ENCODE measurements at regions of chr20 and their contacts with region 1.

Region 1: GRCh38 chr20:25399037-25399430 is 8.4 kb upstream of the ABHD12 start:
- DNase-seq: peak; percentile 26
- H3K4me3 ChIP-seq: no peak overlapping the region
- H3K27me3 ChIP-seq: no peaks in the 10 kb centered on the region
- CTCF ChIP-seq: peak; percentile 61

Region 2: GRCh38 chr20:24992487-24993205 is 406.4 kb before region 1 on chr20 and contains the start of gene APMAP:
- CTCF ChIA-PET with region 1: interaction called, 28 read pairs
- POLR2A ChIA-PET with region 1: no interaction called
- DNase-seq: peak; percentile 44
- H3K4me3 ChIP-seq: peak within 1 kb of the TSS; percentile 89
- H3K27me3 ChIP-seq: 0 out of 2 replicates have a peak, but pooled peaks cover 2% of the 10 kb centered on the region
- CTCF ChIP-seq: no peak
- polyA plus RNA-seq, gene APMAP: 75.8 and 76.2 TPM in 2 replicates

Region 3: GRCh38 chr20:25065625-25066338 is 333.3 kb before region 1 on chr20:
- CTCF ChIA-PET with region 1: interaction called, 13 read pairs
- POLR2A ChIA-PET with region 1: no interaction called
- DNase-seq: no peak
- H3K4me3 ChIP-seq: no peak overlapping the region
- H3K27me3 ChIP-seq: peaks cover 41% of the 10 kb centered on the region
- CTCF ChIP-seq: peak; percentile 82

Region 4: DNA sequence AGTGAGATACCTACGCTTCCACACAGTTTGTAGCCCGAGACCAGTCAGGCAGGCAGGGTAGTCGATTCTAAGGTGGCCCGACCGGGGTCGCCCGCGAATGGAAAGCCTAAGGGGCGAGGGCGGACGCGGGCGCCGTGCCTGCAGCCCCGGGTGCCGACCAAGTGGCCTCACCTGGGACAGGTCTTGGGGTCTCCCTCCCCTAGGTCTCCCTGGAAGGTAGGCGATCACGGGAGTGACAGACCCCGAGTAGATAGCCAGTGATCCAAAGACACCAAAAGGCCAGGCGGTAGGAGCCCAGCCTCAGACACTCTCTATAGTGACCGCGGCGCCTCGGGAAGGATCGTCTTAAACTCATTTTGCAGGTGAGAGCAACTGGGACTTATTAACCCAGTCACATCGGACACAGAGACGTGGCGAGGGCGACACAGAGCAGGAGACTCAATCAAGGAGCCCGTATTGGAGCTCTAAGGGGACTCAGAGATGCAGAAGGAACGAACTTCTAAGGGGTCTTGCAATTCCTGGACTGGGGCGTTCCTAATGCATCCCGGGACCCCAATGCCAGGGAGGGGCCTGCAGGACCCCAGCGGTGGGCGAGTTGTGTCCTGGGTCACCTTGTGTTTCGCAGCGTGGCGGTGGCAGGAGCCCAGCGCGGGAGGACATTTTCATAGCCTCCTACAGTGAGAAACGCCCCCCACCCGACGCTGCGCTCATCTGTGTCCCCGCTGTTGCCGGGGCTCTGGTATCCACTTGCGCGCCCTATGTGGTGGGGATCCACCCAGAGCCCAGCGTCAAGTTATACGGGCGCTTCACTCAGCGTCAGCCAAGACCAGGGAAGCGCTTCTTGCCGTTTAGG is 315.0 kb before region 1 on chr20:
- CTCF ChIA-PET with region 1: interaction called, 12 read pairs
- POLR2A ChIA-PET with region 1: no interaction called
- DNase-seq: no peak
- H3K4me3 ChIP-seq: no peak overlapping the region
- H3K27me3 ChIP-seq: peaks cover 60% of the 10 kb centered on the region
- CTCF ChIP-seq: peak; percentile 53

Region 5: DNA sequence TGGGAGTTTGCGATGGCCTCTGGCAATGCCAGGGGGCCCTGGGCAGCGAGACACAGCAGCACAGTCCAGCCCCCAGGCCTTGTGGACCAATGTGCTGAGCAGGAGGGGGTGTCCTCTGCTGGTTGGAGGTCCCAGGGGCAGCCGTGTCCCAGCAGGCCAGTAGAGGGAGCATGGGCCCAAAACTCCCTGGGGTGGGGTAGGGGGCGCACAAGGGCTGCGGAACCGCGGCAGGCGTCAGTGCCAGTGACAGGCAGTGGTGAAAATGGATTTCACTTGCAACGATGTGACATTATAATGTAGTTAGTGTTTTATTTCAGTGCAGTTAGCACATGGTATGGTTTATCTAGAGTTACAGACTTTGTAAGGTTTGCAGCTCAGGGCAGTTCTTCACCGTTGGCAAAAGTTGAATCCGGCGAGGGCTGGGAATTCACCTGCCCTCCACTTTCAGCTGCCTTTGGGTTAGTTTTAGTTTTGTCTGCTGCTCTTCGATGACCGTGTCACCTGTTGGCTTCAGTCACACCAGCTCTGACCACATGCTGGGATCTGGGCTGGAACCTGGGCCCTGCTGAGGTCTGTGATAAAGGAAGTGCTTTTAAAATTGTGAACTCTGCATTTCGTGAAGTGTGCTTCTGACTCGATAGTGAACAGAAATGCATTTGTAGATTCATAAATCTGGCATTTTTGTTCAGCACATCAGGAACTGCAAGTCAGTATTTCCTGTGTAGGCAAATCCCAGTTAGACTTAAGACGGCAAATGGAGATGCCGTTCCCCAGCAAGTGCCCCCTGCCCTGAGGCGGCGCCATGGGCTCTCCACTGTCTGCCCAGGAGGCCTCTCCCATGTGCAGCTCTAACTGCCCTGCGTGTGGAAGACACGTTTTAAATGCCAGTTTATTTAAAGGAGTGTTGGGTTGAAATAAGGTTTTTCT is 104.3 kb before region 1 on chr20:
- CTCF ChIA-PET with region 1: interaction called, 71 read pairs
- POLR2A ChIA-PET with region 1: no interaction called
- DNase-seq: no peak
- H3K4me3 ChIP-seq: no peak overlapping the region
- H3K27me3 ChIP-seq: no peaks in the 10 kb centered on the region
- CTCF ChIP-seq: peak; percentile 98

Region 6: GRCh38 chr20:25299806-25300205 is 99.2 kb before region 1 on chr20:
- CTCF ChIA-PET with region 1: interaction called, 71 read pairs
- POLR2A ChIA-PET with region 1: no interaction called
- DNase-seq: no peak
- H3K4me3 ChIP-seq: no peak overlapping the region
- H3K27me3 ChIP-seq: no peaks in the 10 kb centered on the region
- CTCF ChIP-seq: no peak

Region 7: GRCh38 chr20:25310268-25310920 is 88.6 kb before region 1 on chr20:
- CTCF ChIA-PET with region 1: interaction called, 24 read pairs
- POLR2A ChIA-PET with region 1: no interaction called
- DNase-seq: peak; percentile 70
- H3K4me3 ChIP-seq: peak overlapping the region; percentile 31
- H3K27me3 ChIP-seq: no peaks in the 10 kb centered on the region
- CTCF ChIP-seq: peak; percentile 88

Region 8: DNA sequence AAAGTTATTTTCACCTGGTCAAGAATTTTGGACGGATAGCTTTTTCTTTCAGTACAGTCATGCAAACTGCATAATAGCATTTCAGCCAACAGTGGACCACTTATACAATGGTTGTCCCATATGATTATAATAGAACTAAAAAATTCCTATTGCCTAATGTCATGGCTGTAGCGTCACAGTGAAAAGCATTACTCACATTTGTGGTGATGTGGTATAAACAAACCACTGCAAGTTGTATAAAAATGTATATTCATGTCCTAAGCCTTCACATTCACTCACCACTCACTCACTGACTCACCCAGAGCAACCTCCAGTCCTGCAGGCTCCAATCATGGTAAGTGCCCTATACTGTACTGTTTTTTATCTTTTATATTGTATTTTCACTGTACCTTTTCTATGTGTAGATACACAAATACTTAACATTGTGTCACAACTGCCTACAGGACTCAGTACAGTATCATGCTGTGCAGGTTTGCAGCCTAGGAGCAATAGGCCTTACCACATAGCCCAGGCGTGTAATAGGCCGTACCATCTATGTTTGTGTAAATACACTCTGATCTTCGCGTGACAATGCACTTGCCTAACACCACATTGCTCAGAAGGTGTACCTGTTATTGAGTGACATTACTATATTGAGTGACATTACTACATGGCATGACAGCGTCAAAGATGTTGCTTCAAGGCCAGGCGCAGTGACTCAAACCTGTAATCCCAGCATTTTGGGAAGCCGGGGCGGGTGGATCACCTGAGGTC is 26.3 kb before region 1 on chr20:
- CTCF ChIA-PET with region 1: no interaction called
- POLR2A ChIA-PET with region 1: no interaction called
- DNase-seq: peak; percentile 76
- H3K4me3 ChIP-seq: no peak overlapping the region
- H3K27me3 ChIP-seq: no peaks in the 10 kb centered on the region
- CTCF ChIP-seq: no peak

Region 9: GRCh38 chr20:25470045-25470444 is 71.0 kb after region 1 on chr20:
- CTCF ChIA-PET with region 1: no interaction called
- POLR2A ChIA-PET with region 1: no interaction called
- DNase-seq: no peak
- H3K4me3 ChIP-seq: no peak overlapping the region
- H3K27me3 ChIP-seq: no peaks in the 10 kb centered on the region
- CTCF ChIP-seq: peak; percentile 53

Region 10: DNA sequence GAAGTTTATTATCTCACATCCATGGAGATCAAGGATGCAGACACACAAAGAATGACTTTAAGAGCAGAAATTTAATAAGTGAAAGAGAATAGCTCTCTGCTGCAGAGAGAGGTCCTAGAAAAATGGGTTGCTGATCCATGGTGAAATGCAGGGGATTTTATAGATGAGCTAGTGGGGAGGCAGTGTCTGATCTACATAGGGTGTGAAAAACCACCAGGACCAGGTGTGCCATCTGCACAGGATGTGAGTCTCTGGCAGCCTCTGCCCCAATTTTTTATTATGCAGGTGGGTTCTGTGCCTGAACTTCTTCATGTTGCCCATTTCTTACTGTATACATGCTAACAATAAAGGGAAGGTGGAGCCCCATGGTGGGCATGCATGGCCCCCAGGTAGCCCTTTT is 244.7 kb after region 1 on chr20:
- CTCF ChIA-PET with region 1: no interaction called
- POLR2A ChIA-PET with region 1: no interaction called
- DNase-seq: no peak
- H3K4me3 ChIP-seq: no peak overlapping the region
- H3K27me3 ChIP-seq: no peaks in the 10 kb centered on the region
- CTCF ChIP-seq: no peak